ENCODE measurements at regions of chr11 and their contacts with region 1.

Region 1: GRCh38 chr11:39489950-39490349 is 1969.5 kb downstream of the LRRC4C start:
- DNase-seq: no peak
- ATAC-seq: no peak
- H3K4me3 ChIP-seq: no peak overlapping the region
- H3K4me3 Mint-ChIP-seq: no peak overlapping the region
- H3K27ac ChIP-seq: no peak overlapping the region
- H3K27ac Mint-ChIP-seq: no peak overlapping the region
- H3K4me1 ChIP-seq: no peaks in the 10 kb centered on the region
- H3K4me1 Mint-ChIP-seq: no peaks in the 10 kb centered on the region
- H3K27me3 ChIP-seq: no peaks in the 10 kb centered on the region
- H3K27me3 Mint-ChIP-seq: no peaks in the 10 kb centered on the region
- CTCF ChIP-seq: no peak

Region 2: GRCh38 chr11:39434466-39434865 is 55.5 kb before region 1 on chr11:
- CTCF ChIA-PET with region 1: no interaction called
- POLR2A ChIA-PET with region 1: no interaction called
- intact Hi-C with region 1: loop called in 1 of 2 experiments (anchors 10 kb)
- DNase-seq: no peak
- ATAC-seq: no peak
- H3K4me3 ChIP-seq: no peak overlapping the region
- H3K4me3 Mint-ChIP-seq: no peak overlapping the region
- H3K27ac ChIP-seq: no peak overlapping the region
- H3K27ac Mint-ChIP-seq: no peak overlapping the region
- H3K4me1 ChIP-seq: no peaks in the 10 kb centered on the region
- H3K4me1 Mint-ChIP-seq: no peaks in the 10 kb centered on the region
- H3K27me3 ChIP-seq: no peaks in the 10 kb centered on the region
- H3K27me3 Mint-ChIP-seq: no peaks in the 10 kb centered on the region
- CTCF ChIP-seq: no peak

Measured in CD4-positive, alpha-beta T cell (primary cell).